WTC11 (cell line): ENCODE measurements at regions of chr17 and their contacts with region 1.

Region 1: DNA sequence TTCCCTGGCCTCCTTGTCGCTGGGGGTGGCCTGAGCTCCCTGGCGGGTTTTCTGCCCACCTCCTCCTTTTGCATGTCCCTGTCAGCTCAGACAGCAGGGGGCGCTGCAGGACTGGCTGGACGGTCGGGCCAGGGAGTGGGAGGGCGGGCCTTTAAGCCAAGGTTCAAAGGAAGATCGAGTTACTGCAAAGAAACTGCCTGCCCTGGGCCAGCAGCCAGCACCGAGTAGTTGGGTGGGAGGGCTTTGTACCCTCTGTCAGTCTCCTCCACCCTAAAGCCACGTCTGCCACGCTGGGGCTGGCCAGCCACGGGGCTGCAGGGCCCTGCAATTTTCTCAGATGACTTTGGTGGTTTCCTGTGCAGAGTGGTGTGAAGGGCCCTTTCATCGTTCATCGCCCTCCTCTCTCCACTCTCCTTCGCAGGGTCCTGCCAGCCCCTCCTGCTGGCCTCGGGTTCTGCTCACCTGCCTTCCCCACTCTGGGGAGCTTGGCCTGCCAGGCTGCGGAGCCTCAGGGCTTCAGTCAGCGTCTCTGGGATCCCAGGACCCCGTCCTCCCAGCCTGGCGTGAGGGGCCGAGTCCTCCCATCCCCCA is 12.3 kb downstream of the GPR142 start:
- DNase-seq: peak; percentile 98
- ATAC-seq: peak; percentile 93
- H3K4me3 Mint-ChIP-seq: no peak overlapping the region
- H3K27ac Mint-ChIP-seq: no peak overlapping the region
- H3K4me1 Mint-ChIP-seq: peaks cover 13% of the 10 kb centered on the region
- H3K27me3 Mint-ChIP-seq: no peaks in the 10 kb centered on the region; the same call in 1 of the 2 replicates
- CTCF ChIP-seq: peak; percentile 94

Region 2: GRCh38 chr17:74361230-74362068 is 18.1 kb before region 1 on chr17 and contains the start of gene BTBD17:
- CTCF ChIA-PET with region 1: interaction called, 138 read pairs
- POLR2A ChIA-PET with region 1: no interaction called
- DNase-seq: peak; percentile 87
- ATAC-seq: peak; percentile 83
- H3K4me3 Mint-ChIP-seq: peak within 1 kb of the TSS; percentile 59
- H3K27ac Mint-ChIP-seq: no peak within 1 kb of the TSS; the same call in 1 of the 2 replicates
- H3K4me1 Mint-ChIP-seq: peaks cover 31% of the 10 kb centered on the region
- H3K27me3 Mint-ChIP-seq: peaks cover 14% of the 10 kb centered on the region
- CTCF ChIP-seq: peak; percentile 78
- total RNA-seq, gene BTBD17: 0.94 to 2.1 TPM (median 2.0 TPM) in 3 replicates

Region 3: DNA sequence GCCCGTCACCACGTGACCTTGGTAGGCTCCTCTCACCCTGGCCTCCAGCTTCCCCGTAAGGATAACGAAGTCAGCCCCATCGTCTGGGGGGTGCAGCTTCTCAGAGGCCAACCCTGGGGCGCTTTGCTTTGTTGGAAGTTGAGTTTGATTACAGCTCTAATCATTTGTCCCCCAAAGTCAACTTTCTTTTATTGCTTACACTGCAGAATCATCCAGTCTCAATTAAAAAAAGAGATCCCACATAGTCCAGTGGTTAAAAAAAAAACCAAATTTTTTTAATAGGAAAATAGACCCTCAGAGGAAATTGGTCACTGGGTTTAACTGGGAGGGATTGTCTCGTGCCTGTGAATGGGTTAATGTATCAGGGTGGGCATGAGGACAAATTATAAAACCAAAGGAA is 44.5 kb after region 1 on chr17:
- CTCF ChIA-PET with region 1: interaction called, 10 read pairs
- POLR2A ChIA-PET with region 1: no interaction called
- DNase-seq: no peak
- ATAC-seq: no peak
- H3K4me3 Mint-ChIP-seq: no peak overlapping the region
- H3K27ac Mint-ChIP-seq: no peak overlapping the region
- H3K4me1 Mint-ChIP-seq: peaks cover 21% of the 10 kb centered on the region
- H3K27me3 Mint-ChIP-seq: peaks cover 5% of the 10 kb centered on the region
- CTCF ChIP-seq: no peak

Region 4: DNA sequence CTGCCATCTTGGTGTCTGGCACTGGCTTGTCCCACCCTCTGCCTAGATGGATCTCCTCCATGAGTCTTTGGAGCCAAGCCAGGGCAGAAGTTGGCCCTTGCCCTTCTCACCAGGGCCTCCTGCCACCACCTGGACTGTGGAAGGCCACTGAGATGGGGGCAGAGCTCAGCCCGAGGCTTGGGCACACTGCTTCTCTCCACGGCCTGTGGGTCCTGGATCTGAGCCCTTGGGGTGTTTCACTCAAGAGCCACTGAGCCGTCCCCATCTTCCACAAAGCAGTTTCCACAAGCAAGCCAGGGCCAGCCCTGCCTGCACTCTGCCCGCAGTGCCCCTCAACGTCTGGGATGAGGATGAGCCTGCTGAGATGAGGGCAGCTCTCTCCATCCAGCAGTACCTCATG is 70.2 kb after region 1 on chr17:
- CTCF ChIA-PET with region 1: interaction called, 36 read pairs
- POLR2A ChIA-PET with region 1: interaction called, 14 read pairs
- DNase-seq: no peak
- ATAC-seq: no peak
- H3K4me3 Mint-ChIP-seq: no peak overlapping the region
- H3K27ac Mint-ChIP-seq: no peak overlapping the region
- H3K4me1 Mint-ChIP-seq: peaks cover 25% of the 10 kb centered on the region
- H3K27me3 Mint-ChIP-seq: peaks cover 24% of the 10 kb centered on the region
- CTCF ChIP-seq: no peak

Region 5: DNA sequence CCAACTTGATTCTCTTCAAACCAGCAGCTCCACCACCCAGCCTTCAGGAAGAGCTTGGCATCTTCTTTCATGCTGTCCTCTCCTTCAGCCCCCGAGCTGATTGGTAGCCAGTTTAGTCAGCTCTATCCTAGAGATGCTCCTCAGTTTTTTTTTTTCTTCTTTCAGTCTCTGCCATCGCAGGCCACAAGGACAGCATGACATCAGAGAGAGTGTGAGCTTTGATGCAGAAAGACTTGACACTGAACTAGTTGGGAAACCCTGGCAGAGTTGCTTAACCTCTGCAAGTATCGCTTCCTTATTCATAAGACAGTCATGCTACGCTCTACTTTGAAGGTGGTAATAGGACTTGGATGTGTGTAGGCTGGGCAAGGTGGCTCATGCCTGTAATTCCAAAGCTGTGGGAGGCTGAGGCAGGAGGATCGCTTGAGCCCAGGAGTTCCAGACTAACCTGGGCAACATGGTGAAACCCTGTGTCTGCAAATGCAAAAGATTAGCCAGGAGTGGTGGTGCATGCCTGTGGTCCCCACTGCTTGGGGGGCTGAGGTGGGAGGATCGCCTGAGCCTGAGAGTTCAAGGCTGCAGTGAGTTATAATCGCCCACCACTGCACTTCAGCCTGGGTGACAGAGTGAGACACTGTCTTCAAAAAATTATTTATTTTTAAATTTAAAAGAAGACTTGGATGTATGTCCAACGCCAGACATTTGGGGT is 149.1 kb after region 1 on chr17:
- CTCF ChIA-PET with region 1: interaction called, 27 read pairs
- POLR2A ChIA-PET with region 1: no interaction called
- DNase-seq: no peak
- ATAC-seq: no peak
- H3K4me3 Mint-ChIP-seq: no peak overlapping the region
- H3K27ac Mint-ChIP-seq: no peak overlapping the region
- H3K4me1 Mint-ChIP-seq: peaks cover 13% of the 10 kb centered on the region
- H3K27me3 Mint-ChIP-seq: peaks cover 36% of the 10 kb centered on the region
- CTCF ChIP-seq: no peak